Common myeloid progenitor, CD34-positive (primary cell): ENCODE measurements at regions of chr16 and their contacts with region 1.

Region 1: DNA sequence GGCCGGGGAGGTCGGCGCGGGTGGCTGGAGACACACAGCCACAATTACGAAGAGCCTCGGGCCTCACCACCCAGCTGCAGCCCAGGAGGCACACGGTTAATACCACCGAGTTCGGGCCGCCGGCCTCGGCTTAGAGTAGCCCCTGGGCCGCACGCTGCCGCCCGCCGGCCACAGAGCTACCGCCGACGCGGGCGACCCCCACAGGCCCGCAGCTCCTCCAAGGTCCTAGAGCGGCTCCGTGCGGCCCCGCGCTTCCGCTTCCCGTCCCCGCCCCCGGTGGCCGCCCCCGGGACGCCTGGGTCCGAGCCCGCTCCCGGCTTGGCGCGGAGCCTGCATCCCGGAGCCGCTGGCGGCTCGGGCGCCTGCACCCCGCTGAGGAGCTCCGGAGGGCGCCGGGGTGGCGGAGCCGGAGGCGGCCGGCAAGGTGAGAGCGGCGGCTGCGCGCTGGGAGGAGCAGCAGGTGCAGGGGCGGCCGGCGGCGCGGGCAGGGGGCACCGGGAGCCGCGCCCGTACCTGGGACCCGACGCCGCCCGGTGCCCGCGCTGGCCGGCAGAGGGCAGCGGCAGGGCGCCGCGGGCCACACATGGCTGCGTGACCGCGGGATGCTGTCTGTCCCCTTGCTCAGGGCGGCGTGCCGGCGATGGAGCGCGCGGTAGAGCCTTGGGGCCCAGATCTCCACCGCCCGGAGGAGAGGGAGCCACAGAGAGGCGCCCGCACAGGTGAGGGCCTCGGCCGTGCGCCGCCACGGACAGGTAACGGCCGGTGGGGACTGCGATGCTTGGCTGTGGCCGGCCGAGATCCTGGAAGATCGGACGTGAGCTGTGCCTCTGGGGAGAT is at the start of gene ZNF48:
- DNase-seq: peak; percentile 80 to 88 (median 86)
- H3K4me3 ChIP-seq: peak within 1 kb of the TSS; percentile 74 to 91 (median 77)
- H3K27ac ChIP-seq: peak within 1 kb of the TSS; percentile 33 to 71
- H3K4me1 ChIP-seq: peaks cover 7 to 41% (median 36%) of the 10 kb centered on the region in 4 experiments
- H3K27me3 ChIP-seq: no peaks in the 10 kb centered on the region

Region 2: DNA sequence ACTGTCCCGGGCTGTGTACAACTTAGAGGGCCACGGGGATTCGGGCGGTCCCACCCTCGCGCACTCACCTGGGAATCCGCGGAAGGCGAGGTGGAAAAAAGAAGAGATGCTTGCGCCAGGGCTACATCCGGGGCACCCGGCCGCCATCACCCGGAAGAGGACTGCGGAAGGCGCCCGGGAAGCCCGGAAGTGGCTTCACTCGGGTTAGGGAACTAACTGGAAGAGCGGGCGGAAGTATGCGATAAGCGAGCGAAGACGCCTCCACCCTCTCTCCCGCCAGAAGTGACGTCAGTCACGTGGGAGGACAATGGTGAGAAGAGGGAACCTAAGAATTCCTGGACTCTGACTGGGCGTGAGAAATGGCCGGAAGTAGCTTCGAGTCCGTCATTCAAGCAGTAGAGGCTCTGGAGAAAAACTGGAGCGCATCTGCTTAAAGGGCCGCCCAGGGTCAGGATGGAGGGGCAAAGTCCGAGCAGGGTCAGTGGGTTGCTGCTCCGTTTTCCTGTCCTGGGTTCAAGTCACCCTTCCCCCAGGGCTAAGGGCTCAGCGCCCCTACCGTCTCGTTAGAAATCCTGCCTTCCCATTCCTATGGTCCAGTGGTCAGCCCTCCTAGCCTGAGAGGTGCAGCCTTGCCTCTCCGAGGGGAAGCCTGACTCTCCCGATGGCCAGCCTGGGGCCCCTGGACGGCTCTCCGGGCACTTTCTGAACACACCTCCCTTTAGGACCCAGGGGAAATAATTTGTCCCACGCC is 40.1 kb before region 1 on chr16 and contains the start of gene CD2BP2:
- CTCF ChIA-PET with region 1: no interaction called
- POLR2A ChIA-PET with region 1: no interaction called
- DNase-seq: peak; percentile 89 to 91 (median 90)
- H3K4me3 ChIP-seq: peak within 1 kb of the TSS; percentile 85 to 96 (median 92)
- H3K27ac ChIP-seq: peak within 1 kb of the TSS; percentile 68 to 88
- H3K4me1 ChIP-seq: peaks cover 0 to 33% (median 25%) of the 10 kb centered on the region in 4 experiments
- H3K27me3 ChIP-seq: no peaks in the 10 kb centered on the region

Region 3: DNA sequence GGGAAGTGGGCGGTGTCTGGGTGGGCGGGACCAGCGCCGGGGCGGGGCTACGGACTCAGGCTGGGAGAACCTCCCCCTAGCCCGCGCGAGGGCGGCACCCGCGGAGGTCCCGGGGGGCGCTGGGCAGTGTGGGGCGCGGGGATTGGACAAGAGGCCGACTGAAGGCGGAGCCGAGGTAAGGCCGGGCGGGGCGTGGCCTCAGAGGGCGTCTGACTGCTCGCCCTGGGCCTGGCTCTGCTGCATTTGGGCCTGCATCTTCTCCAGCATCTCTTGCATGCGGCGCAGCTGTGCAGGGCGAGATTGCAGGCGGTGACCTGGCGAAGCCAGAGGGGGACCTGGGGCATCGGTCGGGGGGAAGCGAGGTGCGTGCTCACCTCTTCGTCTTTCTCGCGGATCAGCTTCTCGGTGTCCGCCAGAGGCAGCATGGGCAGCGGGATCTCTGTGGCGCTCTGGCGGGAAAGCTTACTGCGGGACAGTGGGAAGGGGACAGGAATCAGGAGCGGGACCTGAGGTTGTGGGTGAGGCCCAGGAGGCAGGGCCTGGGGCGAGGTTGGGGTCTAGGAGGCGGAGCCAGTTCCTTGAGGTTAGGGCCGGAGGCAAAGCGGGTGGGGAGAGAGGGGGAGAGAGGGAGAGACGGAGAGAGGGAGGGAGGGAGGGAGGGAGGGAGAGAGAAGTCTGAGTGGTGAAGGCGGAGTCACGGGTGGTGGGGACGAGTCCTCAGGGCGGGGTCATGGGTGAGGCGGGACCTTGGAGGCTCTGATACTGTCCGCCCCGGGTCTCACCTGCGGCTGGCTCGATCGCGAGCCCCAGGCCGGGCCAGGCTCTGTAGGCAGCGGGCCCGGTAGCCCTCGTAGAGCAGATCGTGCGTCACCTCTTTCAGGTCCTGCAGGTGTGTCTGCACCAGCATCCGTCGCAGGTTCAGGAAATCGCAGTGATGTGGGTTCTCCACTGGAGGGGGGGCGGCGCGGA is 16.9 kb before region 1 on chr16:
- CTCF ChIA-PET with region 1: interaction called, 20 read pairs
- POLR2A ChIA-PET with region 1: interaction called, 11 read pairs
- DNase-seq: peak; percentile 98 to 99 (median 99)
- H3K4me3 ChIP-seq: peak overlapping the region; percentile 36 to 93 (median 79)
- H3K27ac ChIP-seq: peak overlapping the region; percentile 94 to 97
- H3K4me1 ChIP-seq: peaks cover 0 to 64% (median 54%) of the 10 kb centered on the region in 4 experiments
- H3K27me3 ChIP-seq: no peaks in the 10 kb centered on the region

Region 4: GRCh38 chr16:30445408-30446202 is 50.2 kb after region 1 on chr16 and contains the start of gene SEPHS2:
- CTCF ChIA-PET with region 1: no interaction called
- POLR2A ChIA-PET with region 1: no interaction called
- DNase-seq: peak; percentile 95 to 98 (median 98)
- H3K4me3 ChIP-seq: peak within 1 kb of the TSS; percentile 65 to 99 (median 95)
- H3K27ac ChIP-seq: peak within 1 kb of the TSS; percentile 94 to 98
- H3K4me1 ChIP-seq: peaks cover 3 to 30% (median 24%) of the 10 kb centered on the region in 4 experiments
- H3K27me3 ChIP-seq: no peaks in the 10 kb centered on the region